A549 (cell line): ENCODE measurements at regions of chr15 and their contacts with region 1.

Region 1: GRCh38 chr15:101641166-101641764 is 10.9 kb downstream of the TM2D3 start:
- DNase-seq: peak; percentile 68 to 73
- ATAC-seq: peak in 1 of 2 experiments; percentile 75; a peak in 3 of 6 replicates
- H3K4me3 ChIP-seq: no peak overlapping the region
- H3K27ac ChIP-seq: no peak overlapping the region
- H3K4me1 ChIP-seq: peaks cover 11% of the 10 kb centered on the region
- CTCF ChIP-seq: peak; percentile 98
- EP300 ChIP-seq: no peak
- POLR2A ChIP-seq: no peak
- RAD21 ChIP-seq: peak; percentile 94 to 98

Region 2: GRCh38 chr15:100733101-100733788 is 908.0 kb before region 1 on chr15:
- CTCF ChIA-PET with region 1: no interaction called
- POLR2A ChIA-PET with region 1: no interaction called
- DNase-seq: peak in 1 of 2 experiments; percentile 36
- ATAC-seq: peak; percentile 26 to 66; a peak in 3 of 6 replicates
- H3K4me3 ChIP-seq: no peak overlapping the region
- H3K27ac ChIP-seq: peak overlapping the region in 1 of 2 experiments; percentile 52; a peak in 3 of 6 replicates
- H3K4me1 ChIP-seq: peaks cover 19% of the 10 kb centered on the region
- CTCF ChIP-seq: no peak
- EP300 ChIP-seq: no peak
- POLR2A ChIP-seq: no peak
- RAD21 ChIP-seq: no peak

Region 3: GRCh38 chr15:101294731-101295606 is 346.3 kb before region 1 on chr15 and contains the start of gene SNRPA1:
- CTCF ChIA-PET with region 1: interaction called, 251 read pairs
- POLR2A ChIA-PET with region 1: interaction called, 5 read pairs
- DNase-seq: peak; percentile 97 to 98
- ATAC-seq: peak; percentile 83 to 91
- H3K4me3 ChIP-seq: peak within 1 kb of the TSS; percentile 95
- H3K27ac ChIP-seq: peak within 1 kb of the TSS; percentile 91 to 97
- H3K4me1 ChIP-seq: peaks cover 36% of the 10 kb centered on the region
- CTCF ChIP-seq: no peak
- EP300 ChIP-seq: no peak
- POLR2A ChIP-seq: peak; percentile 80
- RAD21 ChIP-seq: no peak
- polyA plus RNA-seq, gene SNRPA1: 127 and 177 TPM in 2 replicates

Region 4: DNA sequence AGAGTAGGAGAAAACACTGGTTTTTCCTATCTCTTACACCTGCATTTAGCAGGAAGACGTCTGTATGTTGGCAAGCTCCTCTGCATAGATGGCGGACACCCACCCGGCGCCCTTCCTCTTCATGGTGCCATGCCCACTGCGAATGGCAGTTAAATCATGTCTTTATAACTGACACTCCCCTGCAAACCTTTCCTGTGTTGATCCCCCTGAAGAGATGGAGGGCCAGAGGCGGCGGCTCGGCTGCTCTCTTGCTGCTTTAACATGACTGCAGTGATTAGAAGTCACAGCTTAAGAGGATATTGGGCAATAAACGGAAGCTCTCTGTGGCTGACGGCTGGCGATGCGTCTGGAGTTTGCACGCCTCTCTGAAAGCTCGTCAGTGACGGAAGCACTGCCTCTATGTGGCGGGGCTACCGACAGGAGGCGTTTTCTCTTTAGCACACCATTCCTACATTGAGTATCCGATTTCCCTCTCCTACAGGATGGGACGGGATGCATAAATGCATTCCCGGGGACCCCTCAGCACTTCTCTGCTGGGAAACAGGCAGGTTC is 320.7 kb before region 1 on chr15:
- CTCF ChIA-PET with region 1: interaction called, 27 read pairs
- POLR2A ChIA-PET with region 1: no interaction called
- DNase-seq: no peak
- ATAC-seq: no peak
- H3K4me3 ChIP-seq: no peak overlapping the region
- H3K27ac ChIP-seq: no peak overlapping the region
- H3K4me1 ChIP-seq: no peaks in the 10 kb centered on the region
- CTCF ChIP-seq: no peak
- EP300 ChIP-seq: no peak
- POLR2A ChIP-seq: no peak
- RAD21 ChIP-seq: no peak

Region 5: GRCh38 chr15:101391981-101392640 is 249.2 kb before region 1 on chr15:
- CTCF ChIA-PET with region 1: interaction called, 11 read pairs
- POLR2A ChIA-PET with region 1: no interaction called
- DNase-seq: no peak
- ATAC-seq: no peak
- H3K4me3 ChIP-seq: no peak overlapping the region
- H3K27ac ChIP-seq: no peak overlapping the region
- H3K4me1 ChIP-seq: no peaks in the 10 kb centered on the region
- CTCF ChIP-seq: no peak
- EP300 ChIP-seq: no peak
- POLR2A ChIP-seq: no peak
- RAD21 ChIP-seq: no peak

Region 6: DNA sequence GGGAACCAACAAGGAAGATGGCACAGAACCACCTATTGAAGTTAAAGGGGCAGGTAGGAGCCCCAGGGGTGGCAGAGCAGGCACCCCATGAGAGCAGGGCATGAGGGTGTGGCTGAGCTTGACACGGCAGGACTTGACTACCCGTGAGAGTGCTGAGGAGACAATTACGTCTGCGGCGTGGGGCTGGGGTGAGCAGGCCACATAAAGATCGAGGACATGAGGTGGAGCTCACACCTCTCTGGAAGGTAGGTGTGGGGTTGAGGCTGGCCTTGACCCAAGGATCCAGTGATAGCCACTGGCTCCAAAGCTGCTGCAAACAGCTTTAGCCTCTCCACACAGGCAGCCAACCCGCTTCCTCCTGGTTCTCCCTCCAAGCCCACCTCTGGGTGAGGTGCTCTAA is 216.3 kb before region 1 on chr15:
- CTCF ChIA-PET with region 1: no interaction called
- POLR2A ChIA-PET with region 1: no interaction called
- DNase-seq: no peak
- ATAC-seq: no peak
- H3K4me3 ChIP-seq: no peak overlapping the region
- H3K27ac ChIP-seq: no peak overlapping the region
- H3K4me1 ChIP-seq: no peaks in the 10 kb centered on the region
- CTCF ChIP-seq: no peak
- EP300 ChIP-seq: no peak
- POLR2A ChIP-seq: no peak
- RAD21 ChIP-seq: no peak

Region 7: GRCh38 chr15:101528108-101528916 is 113.0 kb before region 1 on chr15:
- CTCF ChIA-PET with region 1: interaction called, 11 read pairs
- POLR2A ChIA-PET with region 1: no interaction called
- DNase-seq: peak; percentile 52 to 63
- ATAC-seq: peak; percentile 66 to 70
- H3K4me3 ChIP-seq: no peak overlapping the region
- H3K27ac ChIP-seq: peak overlapping the region; percentile 68 to 83
- H3K4me1 ChIP-seq: peaks cover 41% of the 10 kb centered on the region
- CTCF ChIP-seq: no peak
- EP300 ChIP-seq: peak in 1 of 2 experiments; percentile 55; a peak in 2 of 5 replicates
- POLR2A ChIP-seq: no peak
- RAD21 ChIP-seq: 0 out of 5 replicates have a peak, but pooled peaks of 1 of the 2 experiments have one; percentile 4

Region 8: DNA sequence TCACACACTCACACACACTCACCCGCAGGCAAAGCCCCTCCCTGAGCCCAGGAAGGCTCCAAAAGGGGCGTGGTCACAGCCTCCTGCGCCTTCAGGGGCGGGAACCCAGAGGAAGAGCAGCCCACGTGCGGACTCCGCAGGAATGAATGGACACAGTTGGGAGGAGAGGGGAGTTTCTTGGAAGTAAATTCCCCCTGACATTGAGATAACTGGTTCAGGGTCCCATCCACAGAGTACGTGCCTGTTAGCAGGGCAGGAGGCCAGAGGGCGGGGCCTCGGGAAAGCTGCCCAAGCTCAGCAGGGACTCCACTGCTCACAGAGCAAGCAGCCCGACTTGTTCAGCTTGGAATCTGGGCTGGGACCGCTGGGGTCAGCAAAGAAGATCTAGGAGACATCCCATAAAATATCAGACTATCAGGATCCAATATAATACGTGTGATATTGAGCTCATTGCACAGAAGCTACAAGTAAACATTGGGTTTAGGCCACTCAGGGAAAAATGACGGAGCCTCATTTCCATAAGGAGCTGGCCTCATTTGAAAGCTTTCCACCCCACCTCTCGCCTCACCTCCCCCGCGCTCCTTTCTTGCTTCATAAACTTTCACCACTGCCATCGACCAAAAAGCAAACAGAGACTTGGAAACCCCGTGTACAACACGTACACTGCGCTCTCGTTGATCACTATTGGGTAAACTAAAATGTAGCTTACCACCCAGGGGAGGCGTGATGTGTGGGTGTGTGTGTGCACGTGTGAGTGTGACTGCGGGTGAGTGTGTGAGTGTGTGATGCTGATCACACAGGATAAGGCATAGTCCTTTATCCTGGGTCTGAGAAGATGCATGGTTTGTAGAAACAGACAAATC is 25.0 kb before region 1 on chr15:
- CTCF ChIA-PET with region 1: interaction called, 15 read pairs
- POLR2A ChIA-PET with region 1: no interaction called
- DNase-seq: peak; percentile 57 to 74
- ATAC-seq: peak; percentile 76 to 87
- H3K4me3 ChIP-seq: peak overlapping the region; percentile 28; the same call in 2 of the 3 replicates
- H3K27ac ChIP-seq: peak overlapping the region; percentile 56 to 77
- H3K4me1 ChIP-seq: peaks cover 15% of the 10 kb centered on the region
- CTCF ChIP-seq: no peak
- EP300 ChIP-seq: no peak
- POLR2A ChIP-seq: no peak
- RAD21 ChIP-seq: no peak